PC-9 (cell line): ENCODE measurements at regions of chr11 and their contacts with region 1.

Region 1: GRCh38 chr11:9363954-9364912 is 20.2 kb upstream of the IPO7 start:
- DNase-seq: peak; percentile 90 to 94
- H3K4me3 ChIP-seq: peak overlapping the region; percentile 55; the same call in 1 of the 2 replicates
- H3K27ac ChIP-seq: peak overlapping the region; percentile 100
- H3K4me1 ChIP-seq: peaks cover 39% of the 10 kb centered on the region
- H3K27me3 ChIP-seq: no peaks in the 10 kb centered on the region
- CTCF ChIP-seq: no peak

Region 2: GRCh38 chr11:9314291-9315036 is 49.8 kb before region 1 on chr11 and contains the start of gene TMEM41B:
- CTCF ChIA-PET with region 1: no interaction called
- POLR2A ChIA-PET with region 1: interaction called, 12 read pairs
- intact Hi-C with region 1: loop called (anchors 1 kb)
- DNase-seq: peak; percentile 92 to 96
- H3K4me3 ChIP-seq: peak within 1 kb of the TSS; percentile 96
- H3K27ac ChIP-seq: peak within 1 kb of the TSS; percentile 87
- H3K4me1 ChIP-seq: peaks cover 19% of the 10 kb centered on the region
- H3K27me3 ChIP-seq: no peaks in the 10 kb centered on the region
- CTCF ChIP-seq: no peak
- total RNA-seq, gene TMEM41B: 58.5 and 65.1 TPM in 2 replicates

Region 3: GRCh38 chr11:9330387-9331384 is 33.5 kb before region 1 on chr11:
- CTCF ChIA-PET with region 1: no interaction called
- POLR2A ChIA-PET with region 1: interaction called, 11 read pairs
- intact Hi-C with region 1: no loop called
- DNase-seq: peak; percentile 74 to 90
- H3K4me3 ChIP-seq: no peak overlapping the region; the same call in 1 of the 2 replicates
- H3K27ac ChIP-seq: peak overlapping the region; percentile 93
- H3K4me1 ChIP-seq: peaks cover 28% of the 10 kb centered on the region
- H3K27me3 ChIP-seq: no peaks in the 10 kb centered on the region
- CTCF ChIP-seq: no peak

Region 4: DNA sequence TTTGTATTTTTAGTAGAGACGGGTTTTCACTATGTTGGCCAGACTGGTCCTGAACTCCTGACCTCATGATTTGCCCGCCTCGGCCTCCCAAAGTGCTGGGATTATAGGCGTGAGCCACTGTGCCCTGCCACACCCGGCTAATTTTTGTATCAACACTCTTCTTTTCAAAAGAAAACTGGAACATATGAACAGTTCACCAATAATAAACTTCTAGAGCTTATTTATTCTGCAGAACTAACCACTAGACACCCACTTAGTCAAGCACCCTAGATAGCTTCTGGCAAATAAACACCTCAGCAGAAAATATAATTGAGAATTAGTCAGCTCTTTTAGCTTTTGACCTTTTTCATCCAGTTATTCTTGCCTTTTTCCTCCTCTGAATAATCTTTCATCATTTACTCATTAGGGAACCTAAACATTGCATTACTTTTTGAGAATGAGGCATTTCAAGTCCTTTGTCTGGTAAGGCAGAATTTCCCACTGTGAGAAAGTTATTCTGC is 22.5 kb before region 1 on chr11:
- CTCF ChIA-PET with region 1: interaction called, 15 read pairs
- POLR2A ChIA-PET with region 1: no interaction called
- intact Hi-C with region 1: no loop called
- DNase-seq: peak in 1 of 2 experiments; percentile 46
- H3K4me3 ChIP-seq: no peak overlapping the region
- H3K27ac ChIP-seq: peak overlapping the region; percentile 39
- H3K4me1 ChIP-seq: peaks cover 9% of the 10 kb centered on the region; the same call in 1 of the 2 replicates
- H3K27me3 ChIP-seq: no peaks in the 10 kb centered on the region
- CTCF ChIP-seq: no peak

Region 5: DNA sequence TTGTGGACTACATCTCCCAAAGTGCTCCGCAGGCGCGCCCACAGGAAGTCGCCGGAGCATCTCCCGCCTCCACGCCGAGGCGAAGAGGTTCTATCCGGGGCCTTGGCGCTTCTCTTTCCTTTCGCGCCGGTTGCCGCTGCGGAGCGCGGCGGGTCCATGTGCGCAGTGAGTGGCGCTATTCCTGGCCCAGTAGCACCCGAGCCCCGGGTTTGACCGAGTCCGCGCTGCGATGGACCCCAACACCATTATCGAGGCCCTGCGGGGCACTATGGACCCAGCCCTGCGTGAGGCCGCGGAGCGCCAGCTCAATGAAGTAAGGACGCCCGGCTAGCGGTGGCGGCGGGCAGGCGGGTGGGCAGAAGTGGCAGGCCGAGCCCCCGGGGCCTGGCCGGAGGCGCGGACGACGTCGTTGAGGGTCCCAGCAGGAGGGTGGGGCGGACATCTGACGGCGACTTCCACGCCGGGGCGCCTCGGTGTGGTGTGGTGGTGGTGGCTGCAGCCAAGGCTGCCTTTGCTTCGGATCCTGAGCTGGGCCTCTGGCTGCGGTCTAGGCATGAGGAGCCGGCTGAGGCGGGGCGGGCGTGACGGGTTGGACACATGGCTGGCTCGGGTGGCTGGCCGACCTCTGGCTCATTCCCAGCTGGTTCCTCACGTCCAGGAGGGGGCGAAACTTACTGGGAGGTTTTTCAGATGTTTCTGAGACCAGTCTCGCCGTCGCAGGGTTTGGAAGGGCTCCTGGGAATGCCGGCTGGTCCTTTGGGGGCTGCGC is 20.5 kb after region 1 on chr11 and contains the start of gene IPO7:
- CTCF ChIA-PET with region 1: no interaction called
- POLR2A ChIA-PET with region 1: interaction called, 22 read pairs
- intact Hi-C with region 1: loop called (anchors 1 kb)
- DNase-seq: peak; percentile 74 to 75
- H3K4me3 ChIP-seq: peak within 1 kb of the TSS; percentile 81
- H3K27ac ChIP-seq: peak within 1 kb of the TSS; percentile 79
- H3K4me1 ChIP-seq: peaks cover 21% of the 10 kb centered on the region
- H3K27me3 ChIP-seq: no peaks in the 10 kb centered on the region
- CTCF ChIP-seq: no peak
- total RNA-seq, gene IPO7: 83.7 and 126 TPM in 2 replicates

Region 6: GRCh38 chr11:9428706-9429105 is 64.5 kb after region 1 on chr11:
- CTCF ChIA-PET with region 1: no interaction called
- POLR2A ChIA-PET with region 1: no interaction called
- intact Hi-C with region 1: no loop called
- DNase-seq: no peak
- H3K4me3 ChIP-seq: no peak overlapping the region
- H3K27ac ChIP-seq: no peak overlapping the region
- H3K4me1 ChIP-seq: no peaks in the 10 kb centered on the region
- H3K27me3 ChIP-seq: no peaks in the 10 kb centered on the region
- CTCF ChIP-seq: no peak

Region 7: DNA sequence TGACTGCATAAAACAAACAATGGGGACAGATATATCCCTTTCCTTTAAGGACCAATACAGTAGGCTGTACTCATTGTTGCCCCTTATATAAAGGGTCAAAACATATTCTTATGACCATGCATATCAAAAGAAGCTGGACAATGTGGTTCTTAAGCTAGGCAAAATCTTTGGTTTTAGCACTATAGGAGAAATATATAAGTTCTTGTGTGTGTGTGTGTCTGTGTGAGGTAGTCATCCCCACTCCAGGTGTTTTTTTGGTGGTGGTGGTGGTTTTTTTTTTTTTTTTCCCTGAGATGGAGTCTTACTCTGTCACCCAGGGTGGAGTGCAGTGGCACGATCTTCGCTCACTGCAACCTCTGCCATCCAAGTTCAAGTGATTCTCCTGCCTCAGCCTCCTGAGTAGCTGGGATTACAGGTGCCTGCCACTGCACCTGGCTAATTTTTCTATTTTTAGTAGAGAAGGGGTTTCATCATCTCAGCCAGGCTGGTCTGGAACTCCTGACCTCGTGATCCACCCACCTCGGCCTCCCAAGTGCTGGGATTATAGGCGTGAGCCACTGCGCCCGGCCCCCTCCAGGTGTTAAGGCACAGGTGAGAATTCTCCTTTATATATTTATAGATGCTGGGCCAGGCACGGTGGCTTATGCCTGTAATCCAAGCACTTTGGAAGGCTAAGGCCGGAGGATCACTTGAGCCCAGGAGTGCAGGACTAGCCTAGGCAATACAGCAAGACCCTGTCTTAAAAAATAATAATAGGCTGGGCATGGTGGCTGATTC is 84.5 kb after region 1 on chr11:
- CTCF ChIA-PET with region 1: no interaction called
- POLR2A ChIA-PET with region 1: no interaction called
- intact Hi-C with region 1: no loop called
- DNase-seq: no peak
- H3K4me3 ChIP-seq: no peak overlapping the region
- H3K27ac ChIP-seq: no peak overlapping the region
- H3K4me1 ChIP-seq: no peaks in the 10 kb centered on the region
- H3K27me3 ChIP-seq: no peaks in the 10 kb centered on the region
- CTCF ChIP-seq: no peak

Region 8: GRCh38 chr11:9565822-9566560 is 201.8 kb after region 1 on chr11:
- CTCF ChIA-PET with region 1: no interaction called
- POLR2A ChIA-PET with region 1: no interaction called
- intact Hi-C with region 1: loop called (anchors 5 kb)
- DNase-seq: peak; percentile 76 to 99
- H3K4me3 ChIP-seq: peak overlapping the region; percentile 16; the same call in 1 of the 2 replicates
- H3K27ac ChIP-seq: peak overlapping the region; percentile 98
- H3K4me1 ChIP-seq: peaks cover 80% of the 10 kb centered on the region
- H3K27me3 ChIP-seq: no peaks in the 10 kb centered on the region
- CTCF ChIP-seq: no peak